ENCODE measurements at regions of chr12 and their contacts with region 1.

Region 1: DNA sequence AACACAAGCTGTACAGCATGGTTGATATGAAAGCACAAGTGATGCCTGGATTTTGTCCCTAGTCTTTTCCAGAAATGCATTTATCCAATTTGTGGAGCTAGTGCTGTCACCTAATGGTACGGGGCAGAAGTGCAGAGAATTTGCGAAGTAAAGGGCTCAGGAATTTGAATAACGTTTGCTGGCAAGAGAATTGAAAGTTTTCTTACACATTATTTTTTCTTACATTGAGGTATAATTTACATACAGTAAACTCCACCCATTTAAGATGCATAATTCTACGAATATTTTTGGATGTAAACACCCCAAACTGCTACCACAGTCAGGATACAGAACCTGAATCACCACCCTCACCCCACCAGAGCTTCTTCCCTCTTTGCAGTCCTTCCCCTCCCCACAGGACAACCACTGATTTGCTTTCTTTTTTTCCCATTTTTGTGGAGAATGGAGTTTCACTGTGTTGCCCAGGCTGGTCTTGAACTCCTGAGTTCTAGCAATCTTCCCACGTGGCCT is 3.5 kb downstream of the AICDA start:
- DNase-seq: peak; percentile 67
- H3K4me3 ChIP-seq: peak overlapping the region; percentile 72
- H3K27ac ChIP-seq: peak overlapping the region; percentile 81
- H3K4me1 ChIP-seq: peaks cover 45% of the 10 kb centered on the region
- CTCF ChIP-seq: peak; percentile 99

Region 2: GRCh38 chr12:8562310-8562709 is 46.8 kb before region 1 on chr12:
- CTCF ChIA-PET with region 1: no interaction called
- POLR2A ChIA-PET with region 1: interaction called, 10 read pairs
- intact Hi-C with region 1: no loop called
- DNase-seq: no peak
- H3K4me3 ChIP-seq: no peak overlapping the region
- H3K27ac ChIP-seq: no peak overlapping the region
- H3K4me1 ChIP-seq: no peaks in the 10 kb centered on the region
- CTCF ChIP-seq: peak; percentile 69

Region 3: GRCh38 chr12:8590842-8591550 is 18.1 kb before region 1 on chr12:
- CTCF ChIA-PET with region 1: interaction called, 4 read pairs
- POLR2A ChIA-PET with region 1: interaction called, 48 read pairs
- intact Hi-C with region 1: no loop called
- DNase-seq: peak; percentile 61
- H3K4me3 ChIP-seq: peak overlapping the region; percentile 42
- H3K27ac ChIP-seq: peak overlapping the region; percentile 22
- H3K4me1 ChIP-seq: peaks cover 14% of the 10 kb centered on the region
- CTCF ChIP-seq: peak; percentile 70

Region 4: GRCh38 chr12:8629486-8630033 is 20.4 kb after region 1 on chr12:
- CTCF ChIA-PET with region 1: interaction called, 10 read pairs
- POLR2A ChIA-PET with region 1: interaction called, 58 read pairs
- intact Hi-C with region 1: no loop called
- DNase-seq: peak; percentile 47
- H3K4me3 ChIP-seq: peak overlapping the region; percentile 0
- H3K27ac ChIP-seq: peak overlapping the region; percentile 40
- H3K4me1 ChIP-seq: peaks cover 17% of the 10 kb centered on the region
- CTCF ChIP-seq: no peak

Region 5: DNA sequence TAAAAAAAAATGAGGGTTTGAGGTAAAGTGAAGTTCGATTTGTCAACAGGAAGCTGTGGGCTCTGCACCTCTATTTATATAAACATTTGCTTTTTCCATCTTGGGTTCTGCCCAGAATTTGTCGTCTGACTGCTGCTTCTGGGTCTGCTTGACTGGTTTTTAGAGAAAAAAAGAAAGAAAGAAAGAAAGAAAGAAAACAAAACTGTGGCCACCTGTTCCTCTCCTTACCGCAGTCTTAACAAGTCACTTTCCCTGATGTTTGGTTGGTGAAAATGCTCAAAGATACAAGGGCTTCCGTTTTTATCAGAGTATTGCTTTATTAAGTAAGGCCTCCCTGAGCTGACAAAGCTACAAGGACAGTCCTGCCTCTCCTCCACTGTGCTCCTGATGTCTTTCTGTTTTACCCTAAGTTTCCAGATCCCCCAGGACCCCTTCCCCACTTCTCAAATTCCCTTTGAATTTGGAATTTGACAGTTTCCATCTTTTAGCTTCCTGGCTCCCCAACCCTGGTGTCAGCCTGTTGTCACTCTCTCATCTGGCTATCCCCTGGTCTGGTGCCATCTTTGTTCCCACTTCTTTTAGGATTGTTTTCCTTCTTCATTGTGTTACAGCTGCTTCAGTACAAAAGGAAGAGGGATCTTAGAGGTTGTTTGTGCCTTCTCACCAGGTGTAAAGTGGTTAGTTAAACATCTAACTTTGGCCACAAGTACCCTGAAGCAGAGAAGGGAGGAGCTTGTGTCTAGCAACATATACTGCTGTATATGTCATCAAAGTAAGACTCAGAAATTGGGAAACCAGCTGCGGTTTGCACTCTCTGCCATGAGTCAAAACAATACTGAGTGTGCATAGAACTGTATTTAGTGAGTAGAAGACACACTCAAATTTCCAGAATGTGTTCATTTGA is 35.5 kb after region 1 on chr12:
- CTCF ChIA-PET with region 1: interaction called, 5 read pairs
- POLR2A ChIA-PET with region 1: interaction called, 72 read pairs
- intact Hi-C with region 1: loop called (anchors 1 kb)
- DNase-seq: peak; percentile 90
- H3K4me3 ChIP-seq: peak overlapping the region; percentile 56
- H3K27ac ChIP-seq: peak overlapping the region; percentile 98
- H3K4me1 ChIP-seq: peaks cover 80% of the 10 kb centered on the region
- CTCF ChIP-seq: no peak

Measured in OCI-LY7 (cell line).